ENCODE measurements at regions of chr11 and their contacts with region 1.

Region 1: DNA sequence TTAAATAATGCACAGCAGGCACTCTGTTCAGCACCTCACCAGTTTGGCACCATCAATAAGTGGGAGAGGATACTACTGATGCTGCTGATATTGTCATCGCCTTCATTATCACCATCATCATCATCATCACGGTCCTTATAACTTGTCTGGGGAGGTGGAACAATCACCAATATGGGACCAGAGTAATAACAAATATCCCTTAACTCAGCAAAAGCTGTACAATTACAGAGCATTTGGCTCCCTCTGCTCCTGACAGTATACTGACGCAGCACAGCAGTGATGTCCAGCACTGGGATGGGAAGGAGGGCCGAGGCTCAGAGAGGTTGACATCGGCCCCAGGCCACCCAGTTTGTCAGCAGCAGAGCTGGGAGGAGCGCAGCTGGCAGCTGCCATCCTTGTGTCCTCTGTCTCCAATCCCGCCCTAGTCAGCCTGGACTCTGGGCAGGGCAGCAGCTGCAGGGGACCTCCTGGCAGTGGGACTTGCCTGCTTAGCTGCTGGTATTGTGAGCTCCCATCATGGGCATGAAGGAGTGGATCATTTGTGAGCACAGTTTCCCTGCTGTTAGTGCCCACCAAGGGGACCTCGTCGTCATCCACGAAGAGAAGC is 90.0 kb downstream of the DHCR7 start:
- DNase-seq: no peak
- H3K4me3 ChIP-seq: no peak overlapping the region
- H3K27me3 ChIP-seq: no peaks in the 10 kb centered on the region; the same call in 1 of the 2 replicates
- CTCF ChIP-seq: no peak

Region 2: DNA sequence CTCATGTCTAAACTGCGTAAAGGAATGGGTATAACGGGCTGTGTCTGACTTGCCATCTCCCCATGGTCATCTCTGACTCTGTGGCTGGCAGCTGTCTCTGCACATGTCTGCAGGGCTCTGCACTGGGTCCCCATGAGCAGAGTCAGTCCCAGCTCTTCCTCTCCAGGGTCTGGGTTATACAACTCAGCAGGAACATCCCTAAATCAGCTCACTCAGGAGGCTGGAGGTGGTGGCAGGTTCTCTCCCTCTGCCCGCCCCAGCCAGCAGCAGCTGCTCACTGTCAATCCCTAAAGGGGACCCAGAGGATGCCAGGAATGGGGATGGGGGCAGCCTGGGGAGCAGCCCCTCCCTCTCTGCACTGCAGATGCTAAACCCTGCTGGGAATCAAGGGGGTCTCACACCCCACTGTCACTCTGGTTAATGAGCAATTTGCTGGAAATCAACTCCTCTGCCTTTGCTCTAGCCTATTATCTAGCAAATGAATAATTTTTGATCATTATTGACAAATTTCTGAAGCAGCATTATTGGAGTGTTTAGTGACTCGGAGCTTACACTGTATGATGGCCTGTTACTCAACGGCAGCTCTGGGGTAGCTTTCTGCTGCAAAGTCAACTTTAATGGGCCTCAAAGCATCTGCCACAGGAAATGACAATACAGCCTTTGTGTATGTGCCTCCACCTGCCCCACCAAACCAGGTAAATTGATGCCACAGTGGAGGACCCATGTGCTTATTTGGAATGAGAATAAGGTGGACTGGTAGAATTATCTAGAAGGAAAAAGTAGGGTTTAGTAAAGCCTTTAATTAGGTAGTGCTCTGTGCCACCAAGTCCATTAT is 50.2 kb before region 1 on chr11:
- CTCF ChIA-PET with region 1: no interaction called
- POLR2A ChIA-PET with region 1: no interaction called
- DNase-seq: no peak
- H3K4me3 ChIP-seq: no peak overlapping the region
- H3K27me3 ChIP-seq: peaks cover 4% of the 10 kb centered on the region
- CTCF ChIP-seq: no peak

Region 3: GRCh38 chr11:71342951-71343827 is 15.0 kb before region 1 on chr11:
- CTCF ChIA-PET with region 1: interaction called, 10 read pairs
- POLR2A ChIA-PET with region 1: no interaction called
- DNase-seq: no peak
- H3K4me3 ChIP-seq: no peak overlapping the region
- H3K27me3 ChIP-seq: peaks cover 10% of the 10 kb centered on the region
- CTCF ChIP-seq: peak; percentile 67